ENCODE measurements at regions of chr9 and their contacts with region 1.

Region 1: DNA sequence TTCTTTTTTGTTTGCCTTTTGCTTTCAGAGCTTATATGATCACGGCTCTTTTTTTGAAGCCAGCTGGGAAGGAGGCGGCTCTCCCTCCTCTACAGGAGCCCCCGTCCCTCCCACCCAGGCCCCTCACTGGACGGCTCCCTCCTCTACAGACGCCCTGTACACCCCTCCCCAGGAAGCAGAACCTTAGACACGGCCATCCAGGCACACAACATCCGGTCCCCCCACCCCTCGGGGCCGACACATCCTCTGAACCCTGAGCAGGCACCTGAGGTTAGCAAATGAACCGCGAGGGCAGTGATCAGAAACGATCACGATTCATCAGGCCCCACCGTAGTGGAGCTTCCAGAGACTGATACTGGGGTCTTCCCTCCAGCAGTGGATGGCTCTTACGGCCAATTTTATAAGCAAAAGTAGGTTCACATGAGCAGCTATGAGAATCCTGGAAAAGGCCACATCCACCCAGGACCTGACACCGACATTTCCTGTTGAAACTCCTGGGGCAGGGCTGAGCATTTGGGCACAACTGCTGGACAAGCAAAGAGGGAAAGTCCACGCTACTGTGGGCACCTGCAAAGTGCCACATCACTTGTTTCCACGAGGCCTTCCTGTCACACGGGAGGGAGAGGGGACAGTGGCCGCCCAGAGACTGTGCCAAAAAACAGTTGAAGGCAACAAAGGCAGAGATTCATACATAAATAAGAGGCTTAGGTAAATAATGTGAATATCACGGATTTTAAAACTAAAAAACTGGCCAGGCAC is 78.9 kb downstream of the SEMA4D start:
- DNase-seq: no peak
- ATAC-seq: peak; percentile 87
- H3K4me3 ChIP-seq: peak overlapping the region; percentile 62; the same call in 1 of the 2 replicates
- H3K27ac ChIP-seq: peak overlapping the region; percentile 97
- H3K4me1 ChIP-seq: peaks cover 67% of the 10 kb centered on the region
- H3K27me3 ChIP-seq: no peaks in the 10 kb centered on the region
- CTCF ChIP-seq: no peak
- EP300 ChIP-seq: no peak
- POLR2A ChIP-seq: peak; percentile 51
- RAD21 ChIP-seq: no peak

Region 2: DNA sequence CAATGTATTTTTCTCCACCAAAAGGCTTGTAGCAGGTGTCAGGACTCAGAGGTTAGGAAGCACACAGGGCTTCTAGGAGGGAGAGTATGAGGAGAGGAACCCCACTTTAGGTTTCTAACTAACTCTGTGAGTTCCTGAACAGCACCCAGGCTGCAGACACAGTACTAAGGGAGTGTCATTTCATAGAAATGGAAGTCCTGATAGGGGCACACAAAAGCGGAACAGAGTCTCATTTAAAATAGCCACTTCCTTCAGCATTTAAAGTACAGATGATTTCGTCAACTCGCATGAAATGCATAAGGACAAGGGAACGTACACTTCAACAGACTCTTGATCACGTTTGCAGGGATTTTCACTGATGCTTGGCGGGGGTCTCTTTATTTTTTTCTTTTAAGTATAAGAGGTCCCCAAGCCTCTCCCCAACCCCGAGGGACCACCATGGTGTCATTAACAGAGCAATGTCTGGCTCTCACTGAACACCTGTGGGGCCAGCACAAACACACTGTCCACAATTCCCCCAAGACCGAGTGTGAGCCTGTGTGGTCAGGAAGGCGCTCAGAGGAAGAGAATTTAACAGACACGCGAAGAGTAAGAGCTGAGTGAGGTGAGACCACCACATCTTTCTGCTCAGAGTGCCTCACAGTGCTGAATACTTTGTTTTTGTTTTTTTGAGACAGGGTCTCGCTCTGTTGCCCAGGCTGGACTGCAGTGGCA is 18.5 kb before region 1 on chr9:
- CTCF ChIA-PET with region 1: interaction called, 6 read pairs
- POLR2A ChIA-PET with region 1: interaction called, 11 read pairs
- RAD21 ChIA-PET with region 1: interaction called, 29 read pairs
- SMC1A ChIA-PET with region 1: interaction called, 46 read pairs
- in situ Hi-C with region 1: no loop called
- intact Hi-C with region 1: no loop called
- DNase-seq: no peak
- ATAC-seq: peak; percentile 93
- H3K4me3 ChIP-seq: peak overlapping the region; percentile 33; the same call in 1 of the 2 replicates
- H3K27ac ChIP-seq: peak overlapping the region; percentile 72
- H3K4me1 ChIP-seq: peaks cover 39% of the 10 kb centered on the region
- H3K27me3 ChIP-seq: no peaks in the 10 kb centered on the region
- CTCF ChIP-seq: no peak
- EP300 ChIP-seq: peak in 1 of 2 experiments; percentile 28; a peak in 1 of 4 replicates
- POLR2A ChIP-seq: no peak
- RAD21 ChIP-seq: no peak

Region 3: GRCh38 chr9:89489548-89490530 is 70.8 kb after region 1 on chr9:
- CTCF ChIA-PET with region 1: no interaction called
- POLR2A ChIA-PET with region 1: interaction called, 5 read pairs
- RAD21 ChIA-PET with region 1: interaction called, 3 read pairs
- SMC1A ChIA-PET with region 1: interaction called, 10 read pairs
- in situ Hi-C with region 1: no loop called
- intact Hi-C with region 1: no loop called
- DNase-seq: no peak
- ATAC-seq: peak; percentile 37
- H3K4me3 ChIP-seq: peak overlapping the region; percentile 9; the same call in 1 of the 2 replicates
- H3K27ac ChIP-seq: peak overlapping the region; percentile 30
- H3K4me1 ChIP-seq: peaks cover 51% of the 10 kb centered on the region
- H3K27me3 ChIP-seq: no peaks in the 10 kb centered on the region
- CTCF ChIP-seq: no peak
- EP300 ChIP-seq: no peak
- POLR2A ChIP-seq: no peak
- RAD21 ChIP-seq: no peak

Measured in GM12878 (cell line).